IMR-90 (cell line): ENCODE measurements at regions of chr6 and their contacts with region 1.

Region 1: DNA sequence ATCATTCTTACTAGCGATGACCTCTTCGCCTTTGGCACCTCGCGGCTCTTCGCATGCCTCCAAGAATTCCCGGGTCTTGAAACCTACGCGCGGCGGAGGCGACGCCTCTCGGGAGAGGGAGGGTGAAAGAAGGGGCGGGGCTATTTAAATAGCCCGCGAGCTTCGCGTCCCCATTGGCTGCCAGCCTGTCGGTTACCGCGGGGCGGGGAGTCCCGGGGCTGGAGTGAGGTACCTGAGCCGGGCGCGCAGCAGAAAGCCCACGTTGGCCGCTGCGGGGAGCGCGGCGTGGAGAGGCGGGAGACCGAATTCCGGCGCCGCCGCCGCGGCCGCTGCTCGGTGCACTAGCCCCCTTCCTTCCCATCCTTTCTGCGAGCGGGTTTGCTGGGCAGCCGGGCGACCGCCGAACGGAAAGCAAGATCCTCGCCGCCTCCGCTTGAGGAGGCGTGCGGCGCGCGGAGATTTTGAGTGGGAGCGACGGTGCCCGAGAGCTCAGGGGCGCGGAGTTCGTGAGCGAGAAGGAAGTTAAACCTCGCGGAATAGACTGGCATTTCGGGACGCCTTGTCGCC is at the start of gene BMP6:
- DNase-seq: peak; percentile 79
- ATAC-seq: peak; percentile 83
- H3K4me3 ChIP-seq: peak within 1 kb of the TSS; percentile 60
- H3K27ac ChIP-seq: no peak within 1 kb of the TSS; the same call in 1 of the 2 replicates
- H3K4me1 ChIP-seq: peaks cover 3% of the 10 kb centered on the region; the same call in 1 of the 2 replicates
- H3K27me3 ChIP-seq: peaks cover 45% of the 10 kb centered on the region
- CTCF ChIP-seq: no peak
- POLR2A ChIP-seq: no peak
- RAD21 ChIP-seq: no peak
- total RNA-seq, gene BMP6: 0.18 and 0.28 TPM in 2 replicates

Region 2: GRCh38 chr6:7640607-7641577 is 85.0 kb before region 1 on chr6:
- CTCF ChIA-PET with region 1: no interaction called
- POLR2A ChIA-PET with region 1: no interaction called
- dilution Hi-C with region 1: no loop called
- in situ Hi-C with region 1: no loop called
- intact Hi-C with region 1: no loop called
- DNase-seq: peak; percentile 87
- ATAC-seq: peak; percentile 81
- H3K4me3 ChIP-seq: no peak overlapping the region
- H3K27ac ChIP-seq: peak overlapping the region; percentile 30; the same call in 1 of the 2 replicates
- H3K4me1 ChIP-seq: peaks cover 9% of the 10 kb centered on the region
- H3K27me3 ChIP-seq: no peaks in the 10 kb centered on the region
- CTCF ChIP-seq: no peak
- POLR2A ChIP-seq: no peak
- RAD21 ChIP-seq: no peak

Region 3: DNA sequence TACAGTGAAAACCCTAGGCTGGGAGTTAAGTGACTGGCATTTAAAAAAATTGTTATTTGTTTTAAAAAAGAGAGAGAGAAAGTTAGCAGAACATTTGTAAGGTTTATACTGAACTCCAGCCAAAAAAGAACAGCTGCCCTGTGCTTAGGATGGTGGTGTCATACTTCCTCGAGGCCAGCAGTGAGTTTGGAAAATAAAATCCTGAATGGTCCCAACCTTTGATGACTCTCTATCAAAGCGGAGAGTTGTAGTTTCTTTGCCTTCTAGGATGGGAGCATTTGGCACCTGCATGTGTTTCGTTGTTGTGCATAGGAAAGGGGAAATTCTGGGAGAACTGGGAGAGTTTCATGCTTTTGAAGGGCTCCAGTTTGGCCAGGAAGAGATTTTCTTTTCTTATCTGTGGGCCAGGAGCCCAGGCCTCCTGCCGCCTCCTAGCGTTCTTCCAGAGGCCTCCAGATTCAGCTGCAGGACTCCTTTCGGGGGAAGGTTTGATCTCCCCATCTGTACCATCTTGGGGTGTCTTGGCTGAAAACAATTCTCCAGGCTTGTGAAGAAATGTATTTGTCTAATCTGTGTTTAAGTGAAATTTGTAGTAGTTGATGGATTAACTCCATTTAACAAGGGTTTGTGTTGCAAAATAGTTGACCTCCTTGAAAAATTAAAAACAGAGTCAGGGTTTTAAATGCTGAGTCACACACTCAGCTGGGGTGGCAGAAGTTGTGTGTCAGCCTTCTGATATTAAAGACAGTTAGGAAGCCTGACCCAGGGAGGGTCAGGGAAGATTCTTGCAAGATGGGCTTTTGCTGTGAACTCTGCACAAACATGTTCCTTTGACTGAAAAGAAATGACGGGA is 121.3 kb after region 1 on chr6:
- CTCF ChIA-PET with region 1: no interaction called
- POLR2A ChIA-PET with region 1: no interaction called
- dilution Hi-C with region 1: no loop called
- in situ Hi-C with region 1: no loop called
- intact Hi-C with region 1: loop called (anchors 2 kb)
- DNase-seq: peak; percentile 74
- ATAC-seq: peak; percentile 91
- H3K4me3 ChIP-seq: no peak overlapping the region
- H3K27ac ChIP-seq: peak overlapping the region; percentile 88; the same call in 1 of the 2 replicates
- H3K4me1 ChIP-seq: peaks cover 8% of the 10 kb centered on the region
- H3K27me3 ChIP-seq: no peaks in the 10 kb centered on the region
- CTCF ChIP-seq: peak; percentile 34
- POLR2A ChIP-seq: no peak
- RAD21 ChIP-seq: no peak

Region 4: DNA sequence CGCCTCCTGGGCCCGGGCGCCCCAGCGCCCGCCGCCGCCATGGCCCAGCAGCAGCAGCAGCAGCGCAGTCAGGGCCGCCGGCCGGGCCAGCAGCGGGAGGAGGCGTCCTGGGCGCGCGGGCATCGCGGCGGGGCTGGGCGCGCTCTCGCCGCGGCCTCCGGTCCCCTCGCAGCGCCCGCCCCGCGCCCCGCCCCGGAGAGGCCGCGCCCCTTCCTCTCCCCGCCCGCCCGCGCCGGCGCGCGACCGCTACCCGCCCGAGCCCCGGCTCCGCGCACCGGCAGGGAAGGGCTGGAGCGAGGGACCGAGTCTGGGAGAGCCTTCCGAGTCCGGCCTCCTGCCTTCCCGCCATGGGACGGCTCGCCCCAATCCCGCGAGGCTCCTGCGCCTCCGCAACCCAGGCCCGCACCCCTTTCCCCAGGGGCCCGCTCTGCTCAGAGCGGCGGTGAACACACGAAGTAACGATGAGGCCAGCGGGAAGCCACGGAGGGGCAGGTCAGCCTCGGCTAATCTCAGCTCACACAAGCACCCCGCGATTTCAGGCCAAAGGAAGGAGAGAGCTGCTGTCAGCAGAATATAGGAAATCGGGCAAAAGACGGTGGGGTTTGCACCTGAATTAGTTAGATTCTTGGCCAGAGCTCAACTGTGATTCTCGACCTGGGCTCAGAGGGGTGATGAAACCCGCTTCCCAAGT is 184.9 kb after region 1 on chr6 and contains the start of gene TXNDC5:
- CTCF ChIA-PET with region 1: no interaction called
- POLR2A ChIA-PET with region 1: no interaction called
- dilution Hi-C with region 1: no loop called
- in situ Hi-C with region 1: no loop called
- intact Hi-C with region 1: loop called (anchors 1 kb)
- DNase-seq: peak; percentile 62
- ATAC-seq: peak; percentile 94
- H3K4me3 ChIP-seq: peak within 1 kb of the TSS; percentile 96
- H3K27ac ChIP-seq: peak within 1 kb of the TSS; percentile 81
- H3K4me1 ChIP-seq: peaks cover 6% of the 10 kb centered on the region; the same call in 1 of the 2 replicates
- H3K27me3 ChIP-seq: peaks cover 29% of the 10 kb centered on the region
- CTCF ChIP-seq: no peak
- POLR2A ChIP-seq: no peak
- RAD21 ChIP-seq: no peak
- total RNA-seq, gene TXNDC5: 418 and 439 TPM in 2 replicates

Region 5: GRCh38 chr6:7992002-7992815 is 266.3 kb after region 1 on chr6:
- CTCF ChIA-PET with region 1: interaction called, 14 read pairs
- POLR2A ChIA-PET with region 1: no interaction called
- dilution Hi-C with region 1: no loop called
- in situ Hi-C with region 1: loop called (anchors 5 kb)
- intact Hi-C with region 1: loop called (anchors 2 kb)
- DNase-seq: peak; percentile 92
- ATAC-seq: peak; percentile 87
- H3K4me3 ChIP-seq: peak overlapping the region; percentile 26; the same call in 1 of the 2 replicates
- H3K27ac ChIP-seq: peak overlapping the region; percentile 89
- H3K4me1 ChIP-seq: peaks cover 6% of the 10 kb centered on the region
- H3K27me3 ChIP-seq: no peaks in the 10 kb centered on the region
- CTCF ChIP-seq: peak; percentile 56
- POLR2A ChIP-seq: no peak
- RAD21 ChIP-seq: peak; percentile 57

Region 6: GRCh38 chr6:8014947-8015346 is 289.0 kb after region 1 on chr6:
- CTCF ChIA-PET with region 1: interaction called, 5 read pairs
- POLR2A ChIA-PET with region 1: no interaction called
- dilution Hi-C with region 1: no loop called
- in situ Hi-C with region 1: loop called (anchors 5 kb)
- intact Hi-C with region 1: no loop called
- DNase-seq: peak; percentile 31
- ATAC-seq: peak; percentile 37
- H3K4me3 ChIP-seq: no peak overlapping the region
- H3K27ac ChIP-seq: no peak overlapping the region
- H3K4me1 ChIP-seq: peaks cover 2% of the 10 kb centered on the region; the same call in 1 of the 2 replicates
- H3K27me3 ChIP-seq: no peaks in the 10 kb centered on the region
- CTCF ChIP-seq: no peak
- POLR2A ChIP-seq: no peak
- RAD21 ChIP-seq: no peak

Region 7: GRCh38 chr6:8219352-8219943 is 493.5 kb after region 1 on chr6:
- CTCF ChIA-PET with region 1: no interaction called
- POLR2A ChIA-PET with region 1: no interaction called
- dilution Hi-C with region 1: no loop called
- in situ Hi-C with region 1: no loop called
- intact Hi-C with region 1: loop called (anchors 2 kb)
- DNase-seq: peak; percentile 63
- ATAC-seq: peak; percentile 79
- H3K4me3 ChIP-seq: no peak overlapping the region
- H3K27ac ChIP-seq: no peak overlapping the region
- H3K4me1 ChIP-seq: no peaks in the 10 kb centered on the region
- H3K27me3 ChIP-seq: peaks cover 2% of the 10 kb centered on the region; the same call in 1 of the 2 replicates
- CTCF ChIP-seq: peak; percentile 82
- POLR2A ChIP-seq: no peak
- RAD21 ChIP-seq: peak; percentile 89

Region 8: GRCh38 chr6:8400663-8401062 is 674.7 kb after region 1 on chr6:
- CTCF ChIA-PET with region 1: no interaction called
- POLR2A ChIA-PET with region 1: no interaction called
- dilution Hi-C with region 1: no loop called
- in situ Hi-C with region 1: no loop called
- intact Hi-C with region 1: no loop called
- DNase-seq: no peak
- ATAC-seq: no peak; the same call in 1 of the 2 replicates
- H3K4me3 ChIP-seq: no peak overlapping the region
- H3K27ac ChIP-seq: no peak overlapping the region
- H3K4me1 ChIP-seq: no peaks in the 10 kb centered on the region
- H3K27me3 ChIP-seq: no peaks in the 10 kb centered on the region
- CTCF ChIP-seq: no peak
- POLR2A ChIP-seq: no peak
- RAD21 ChIP-seq: no peak